ENCODE measurements at regions of chr12 and their contacts with region 1.

Region 1: GRCh38 chr12:89051065-89051677 is 301.1 kb downstream of the DUSP6 start:
- DNase-seq: peak in 1 of 2 donors; percentile 3
- H3K4me3 ChIP-seq: no peak overlapping the region
- H3K27ac ChIP-seq: no peak overlapping the region
- H3K4me1 ChIP-seq: no peaks in the 10 kb centered on the region
- H3K27me3 ChIP-seq: no peaks in the 10 kb centered on the region
- CTCF ChIP-seq: peak; percentile 84 to 95 (median 88)
- POLR2A ChIP-seq: no peak

Region 2: GRCh38 chr12:89461649-89462612 is 410.8 kb after region 1 on chr12:
- intact Hi-C with region 1: loop called (anchors 5 kb)
- DNase-seq: no peak
- H3K4me3 ChIP-seq: no peak overlapping the region
- H3K27ac ChIP-seq: peak overlapping the region in 1 of 3 donors; percentile 30
- H3K4me1 ChIP-seq: no peaks in the 10 kb centered on the region
- H3K27me3 ChIP-seq: no peaks in the 10 kb centered on the region
- CTCF ChIP-seq: peak in 4 of 6 experiments; percentile 51 to 88 (median 66)
- POLR2A ChIP-seq: no peak